ENCODE measurements at regions of chr17 and their contacts with region 1.

Region 1: DNA sequence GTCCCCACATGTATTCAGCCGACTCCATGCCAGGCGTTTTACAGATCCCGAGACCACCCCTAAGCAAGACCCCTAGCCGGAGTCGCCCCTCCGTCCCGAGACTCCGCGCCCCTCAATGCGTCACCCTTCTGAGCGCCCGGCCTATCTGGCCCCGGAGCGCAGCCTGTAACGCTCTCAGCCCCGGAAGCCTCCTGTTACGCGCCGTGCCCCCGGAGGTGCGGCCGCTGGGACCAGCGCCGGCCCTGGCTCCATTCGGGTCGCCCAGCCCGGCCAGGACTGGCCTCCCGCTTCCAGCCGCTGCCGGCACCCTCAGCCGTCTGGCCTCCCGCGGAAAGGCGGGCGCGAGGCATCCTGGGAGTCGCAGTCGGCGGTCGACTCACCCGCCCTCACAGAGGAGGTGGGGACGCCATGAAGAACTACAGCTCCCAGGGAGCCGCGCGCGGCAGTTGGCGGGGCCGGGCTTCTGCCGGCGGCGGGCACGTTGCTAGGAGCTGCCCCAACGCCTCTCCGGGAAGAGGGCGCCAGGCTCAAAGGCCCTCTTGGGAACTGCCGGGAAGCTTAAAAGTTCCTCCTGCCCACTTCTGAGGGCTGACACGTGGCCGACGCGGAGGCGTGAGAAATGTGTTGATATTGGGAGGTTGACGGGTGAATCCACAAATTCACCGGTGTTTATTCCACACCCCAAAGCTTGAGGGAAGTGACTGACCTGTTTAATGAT is at the start of gene FBF1:
- DNase-seq: peak; percentile 97 to 98
- H3K4me3 ChIP-seq: peak within 1 kb of the TSS; percentile 65
- H3K4me3 Mint-ChIP-seq: peak within 1 kb of the TSS; percentile 79
- H3K27ac Mint-ChIP-seq: peak within 1 kb of the TSS; percentile 79
- H3K4me1 ChIP-seq: no peaks in the 10 kb centered on the region
- H3K4me1 Mint-ChIP-seq: no peaks in the 10 kb centered on the region
- H3K27me3 ChIP-seq: no peaks in the 10 kb centered on the region
- H3K27me3 Mint-ChIP-seq: no peaks in the 10 kb centered on the region
- CTCF ChIP-seq: no peak
- total RNA-seq, gene FBF1: 13.9 and 14.1 TPM in 2 replicates

Region 2: GRCh38 chr17:75864448-75864871 is 76.4 kb before region 1 on chr17:
- CTCF ChIA-PET with region 1: no interaction called
- POLR2A ChIA-PET with region 1: no interaction called
- intact Hi-C with region 1: no loop called
- DNase-seq: no peak
- H3K4me3 ChIP-seq: no peak overlapping the region
- H3K4me3 Mint-ChIP-seq: no peak overlapping the region
- H3K27ac Mint-ChIP-seq: no peak overlapping the region
- H3K4me1 ChIP-seq: no peaks in the 10 kb centered on the region
- H3K4me1 Mint-ChIP-seq: no peaks in the 10 kb centered on the region
- H3K27me3 ChIP-seq: no peaks in the 10 kb centered on the region
- H3K27me3 Mint-ChIP-seq: no peaks in the 10 kb centered on the region
- CTCF ChIP-seq: no peak

Region 3: GRCh38 chr17:76005263-76006149 is 64.6 kb after region 1 on chr17:
- CTCF ChIA-PET with region 1: interaction called, 11 read pairs
- POLR2A ChIA-PET with region 1: interaction called, 6 read pairs
- intact Hi-C with region 1: loop called (anchors 2 kb)
- DNase-seq: peak; percentile 85 to 93
- H3K4me3 ChIP-seq: no peak overlapping the region
- H3K4me3 Mint-ChIP-seq: no peak overlapping the region
- H3K27ac Mint-ChIP-seq: peak overlapping the region; percentile 30
- H3K4me1 ChIP-seq: peaks cover 10% of the 10 kb centered on the region
- H3K4me1 Mint-ChIP-seq: peaks cover 10% of the 10 kb centered on the region
- H3K27me3 ChIP-seq: no peaks in the 10 kb centered on the region
- H3K27me3 Mint-ChIP-seq: no peaks in the 10 kb centered on the region
- CTCF ChIP-seq: peak; percentile 68 to 92